ENCODE measurements at regions of chr11 and their contacts with region 1.

Region 1: GRCh38 chr11:36258730-36259360 is 30.4 kb downstream of the COMMD9 start:
- DNase-seq: peak; percentile 36
- ATAC-seq: peak; percentile 97
- H3K4me3 ChIP-seq: no peak overlapping the region
- H3K27ac ChIP-seq: no peak overlapping the region
- H3K4me1 ChIP-seq: peaks cover 3 to 20% of the 10 kb centered on the region in 2 experiments; a peak in 3 of 4 replicates
- H3K27me3 ChIP-seq: no peaks in the 10 kb centered on the region
- CTCF ChIP-seq: peak; percentile 78 to 80 (median 78)
- POLR2A ChIP-seq: no peak
- RAD21 ChIP-seq: peak; percentile 87

Region 2: DNA sequence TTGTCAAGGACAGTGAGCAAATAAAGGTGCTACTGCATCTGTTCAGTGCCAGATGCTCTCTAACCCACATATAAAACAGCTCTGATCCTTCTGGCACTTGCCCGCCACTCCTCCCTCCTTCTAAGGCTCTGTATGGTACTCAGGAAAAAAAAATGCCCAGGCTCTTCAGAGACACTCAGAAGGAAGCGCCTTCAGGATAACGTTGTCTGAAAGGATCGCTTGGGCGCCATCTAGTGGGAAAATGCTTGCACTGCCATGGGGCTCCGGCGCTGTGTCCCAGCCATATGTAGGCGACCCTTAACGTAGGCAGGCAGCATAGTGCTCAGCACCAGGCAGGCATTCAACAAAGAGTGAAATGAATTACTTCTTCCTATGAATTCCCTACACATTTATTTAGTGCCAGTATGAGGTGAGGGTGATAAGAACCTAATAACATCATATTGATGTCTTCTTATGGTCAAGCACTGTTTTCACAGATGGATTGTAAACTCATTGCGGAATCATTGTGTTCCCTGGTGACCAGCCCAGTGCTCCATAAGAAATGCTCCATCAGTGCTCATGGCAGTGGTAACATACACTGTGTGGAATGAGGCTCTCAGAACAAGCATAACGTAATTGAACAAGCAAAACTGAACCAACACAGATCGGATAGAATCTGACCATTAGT is 773.1 kb before region 1 on chr11:
- CTCF ChIA-PET with region 1: interaction called, 11 read pairs
- POLR2A ChIA-PET with region 1: no interaction called
- RAD21 ChIA-PET with region 1: no interaction called
- intact Hi-C with region 1: no loop called
- DNase-seq: peak; percentile 73
- ATAC-seq: peak; percentile 99
- H3K4me3 ChIP-seq: no peak overlapping the region
- H3K27ac ChIP-seq: no peak overlapping the region
- H3K4me1 ChIP-seq: peaks cover 0 to 4% of the 10 kb centered on the region in 2 experiments; a peak in 1 of 4 replicates
- H3K27me3 ChIP-seq: no peaks in the 10 kb centered on the region
- CTCF ChIP-seq: peak; percentile 71 to 93 (median 92)
- POLR2A ChIP-seq: no peak
- RAD21 ChIP-seq: peak; percentile 71

Region 3: DNA sequence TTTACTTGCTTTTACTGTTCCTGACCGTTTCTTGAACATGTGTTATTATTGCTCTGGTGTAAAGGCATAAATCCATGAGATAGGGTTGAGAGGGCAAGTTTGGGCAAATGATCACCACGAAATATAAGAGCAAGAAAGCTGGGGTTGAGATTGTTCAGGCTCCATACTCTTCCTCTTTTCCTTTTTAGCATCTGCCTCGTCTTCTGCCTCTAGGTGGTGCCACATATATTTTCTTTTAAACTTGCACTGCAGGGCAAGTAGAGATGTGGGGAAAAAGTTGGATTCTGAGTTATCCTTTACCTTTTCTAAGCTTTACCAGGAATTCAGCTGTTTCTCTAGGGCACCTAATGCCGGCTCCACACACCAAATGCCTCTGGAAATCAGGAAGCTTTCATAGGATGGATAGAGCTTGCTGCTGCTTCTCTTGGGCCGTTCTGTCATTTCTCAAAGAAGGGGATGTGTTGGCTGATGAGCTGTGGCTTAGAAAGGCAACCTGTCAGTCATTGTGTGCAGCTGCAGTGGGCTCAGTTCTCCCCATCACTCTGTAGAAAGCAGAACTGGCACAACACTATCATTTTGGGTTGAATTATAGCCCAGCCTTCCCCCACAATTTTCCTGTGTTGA is 216.7 kb before region 1 on chr11:
- CTCF ChIA-PET with region 1: interaction called, 14 read pairs
- POLR2A ChIA-PET with region 1: no interaction called
- RAD21 ChIA-PET with region 1: interaction called in 1 of 2 experiments, 3 read pairs
- intact Hi-C with region 1: loop called (anchors 5 kb)
- DNase-seq: no peak
- ATAC-seq: peak; percentile 73
- H3K4me3 ChIP-seq: no peak overlapping the region
- H3K27ac ChIP-seq: no peak overlapping the region
- H3K4me1 ChIP-seq: no peaks in the 10 kb centered on the region
- H3K27me3 ChIP-seq: no peaks in the 10 kb centered on the region
- CTCF ChIP-seq: peak; percentile 33 to 52 (median 33); a peak in 4 of 6 replicates
- POLR2A ChIP-seq: no peak
- RAD21 ChIP-seq: peak; percentile 54

Region 4: GRCh38 chr11:36149538-36150242 is 109.2 kb before region 1 on chr11:
- CTCF ChIA-PET with region 1: interaction called, 11 read pairs
- POLR2A ChIA-PET with region 1: no interaction called
- RAD21 ChIA-PET with region 1: no interaction called
- intact Hi-C with region 1: loop called (anchors 5 kb)
- DNase-seq: peak; percentile 99
- ATAC-seq: peak; percentile 93
- H3K4me3 ChIP-seq: peak overlapping the region in 1 of 2 experiments; percentile 33; a peak in 2 of 4 replicates
- H3K27ac ChIP-seq: peak overlapping the region; percentile 81
- H3K4me1 ChIP-seq: peaks cover 22 to 45% of the 10 kb centered on the region in 2 experiments
- H3K27me3 ChIP-seq: no peaks in the 10 kb centered on the region
- CTCF ChIP-seq: peak; percentile 73 to 83 (median 80)
- POLR2A ChIP-seq: no peak
- RAD21 ChIP-seq: peak; percentile 83

Region 5: GRCh38 chr11:36156161-36156816 is 102.6 kb before region 1 on chr11:
- CTCF ChIA-PET with region 1: interaction called, 11 read pairs
- POLR2A ChIA-PET with region 1: no interaction called
- RAD21 ChIA-PET with region 1: interaction called in 1 of 2 experiments, 6 read pairs
- intact Hi-C with region 1: loop called (anchors 5 kb)
- DNase-seq: no peak
- ATAC-seq: no peak
- H3K4me3 ChIP-seq: no peak overlapping the region
- H3K27ac ChIP-seq: no peak overlapping the region
- H3K4me1 ChIP-seq: peaks cover 0 to under 1% of the 10 kb centered on the region in 2 experiments; a peak in 1 of 4 replicates
- H3K27me3 ChIP-seq: no peaks in the 10 kb centered on the region
- CTCF ChIP-seq: 0 out of 6 replicates have a peak, but pooled peaks of 1 of the 3 experiments have one; percentile 1
- POLR2A ChIP-seq: no peak
- RAD21 ChIP-seq: no peak

Measured in HCT116 (cell line).